Activated T-helper 1 cell treated with anti-CD3 and anti-CD28 coated beads, Interleukin-12 subunit alpha, Interleukin-12 subunit beta, Interleukin-2, Interleukin-4 antibody, amounts not matched to agents 30 ng/mL and 10 ng/mL and 1 ng/mL, durations not matched to agents 14 hours and 24 hours and 36 hours (primary cell): ENCODE measurements at regions of chr19 and their contacts with region 1.

Region 1: GRCh38 chr19:42450314-42450934 is 7.7 kb upstream of the CXCL17 start:
- DNase-seq: peak; percentile 74
- H3K4me3 Mint-ChIP-seq: no peak overlapping the region
- H3K27ac Mint-ChIP-seq: no peak overlapping the region
- H3K4me1 Mint-ChIP-seq: peaks cover 7% of the 10 kb centered on the region
- H3K27me3 Mint-ChIP-seq: peaks cover 2% of the 10 kb centered on the region

Region 2: GRCh38 chr19:42352301-42353259 is 97.8 kb before region 1 on chr19:
- intact Hi-C with region 1: no loop called
- DNase-seq: no peak
- H3K4me3 Mint-ChIP-seq: no peak overlapping the region
- H3K27ac Mint-ChIP-seq: no peak overlapping the region
- H3K4me1 Mint-ChIP-seq: no peaks in the 10 kb centered on the region
- H3K27me3 Mint-ChIP-seq: no peaks in the 10 kb centered on the region

Region 3: DNA sequence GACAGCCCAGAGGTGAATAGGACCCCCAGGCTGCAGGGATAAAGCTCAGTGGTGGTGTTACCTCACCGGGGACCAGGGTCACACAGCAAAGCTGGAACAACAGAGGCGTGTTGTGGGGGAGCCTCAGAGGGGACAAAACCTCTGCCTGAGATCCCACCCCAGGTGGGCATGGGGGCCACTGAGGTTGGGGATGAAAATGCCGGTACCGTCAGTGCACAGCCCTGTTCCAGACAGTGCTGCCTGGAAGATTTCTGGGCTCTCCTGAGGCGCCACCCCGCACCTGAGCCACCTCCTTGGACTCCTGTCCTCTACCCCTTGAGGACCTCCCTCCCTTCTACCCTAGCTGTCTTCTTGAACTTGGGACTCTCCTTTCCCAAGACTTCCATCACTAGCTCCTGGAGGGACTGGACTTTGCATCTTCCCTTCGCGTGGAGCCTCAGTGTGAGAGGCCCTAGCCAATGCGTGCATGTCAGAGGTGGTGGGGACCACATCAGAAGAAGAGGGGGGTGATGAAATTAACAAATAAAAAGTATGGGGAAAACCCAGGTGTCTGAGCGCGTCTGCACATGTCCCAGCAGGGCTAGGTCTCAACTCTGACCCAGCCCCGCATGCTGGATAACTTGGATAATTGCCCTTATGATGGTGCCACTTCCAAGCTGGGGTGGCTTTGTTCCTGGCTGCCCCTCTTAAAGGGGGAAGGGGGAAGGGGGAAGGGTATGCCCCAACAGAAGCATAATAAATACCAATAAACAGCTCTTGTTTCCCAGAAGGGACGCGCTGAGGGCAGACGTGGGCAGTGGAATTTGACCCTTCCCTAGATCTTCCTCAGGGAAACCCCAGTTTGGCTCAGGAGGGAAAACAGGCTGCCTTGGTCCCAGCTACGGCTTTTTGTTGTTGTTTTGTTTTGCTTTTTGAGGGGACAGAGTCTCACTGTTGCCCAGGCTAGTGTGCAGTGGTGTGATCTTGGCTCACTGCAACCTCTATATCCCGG is 71.9 kb before region 1 on chr19:
- intact Hi-C with region 1: no loop called
- DNase-seq: no peak
- H3K4me3 Mint-ChIP-seq: no peak overlapping the region
- H3K27ac Mint-ChIP-seq: no peak overlapping the region
- H3K4me1 Mint-ChIP-seq: no peaks in the 10 kb centered on the region
- H3K27me3 Mint-ChIP-seq: peaks cover 5% of the 10 kb centered on the region

Region 4: GRCh38 chr19:42468273-42468796 is 17.9 kb after region 1 on chr19:
- intact Hi-C with region 1: no loop called
- DNase-seq: no peak
- H3K4me3 Mint-ChIP-seq: no peak overlapping the region
- H3K27ac Mint-ChIP-seq: no peak overlapping the region
- H3K4me1 Mint-ChIP-seq: peaks cover 27% of the 10 kb centered on the region
- H3K27me3 Mint-ChIP-seq: peaks cover 3% of the 10 kb centered on the region

Region 5: DNA sequence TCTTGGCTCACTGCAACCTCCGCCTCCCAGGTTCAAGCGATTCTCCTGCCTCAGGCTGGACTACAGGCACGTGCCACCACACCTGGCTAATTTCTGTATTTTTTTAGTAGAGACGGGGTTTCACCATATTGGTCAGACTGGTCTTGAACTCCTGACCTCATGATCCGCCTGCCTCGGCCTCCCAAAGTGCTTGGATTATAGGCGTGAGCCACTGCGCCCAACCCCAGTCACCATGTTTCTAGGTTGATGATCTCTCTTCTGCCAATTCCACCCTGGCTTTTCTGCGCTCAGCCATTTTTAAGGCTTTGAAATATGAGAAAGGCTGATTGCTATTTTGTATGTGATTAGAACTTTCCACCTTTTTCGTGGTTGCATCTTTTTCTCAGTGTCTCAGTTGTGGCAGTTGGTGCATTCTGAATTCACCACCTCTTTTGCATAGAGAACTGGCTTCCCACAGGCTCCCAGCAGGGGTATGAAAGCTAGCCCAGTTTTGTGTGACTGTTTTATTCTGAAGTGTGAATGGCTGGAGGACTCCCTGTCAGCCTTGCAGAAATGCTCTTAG is 62.4 kb after region 1 on chr19:
- intact Hi-C with region 1: loop called (anchors 1 kb)
- DNase-seq: no peak
- H3K4me3 Mint-ChIP-seq: no peak overlapping the region
- H3K27ac Mint-ChIP-seq: peak overlapping the region; percentile 75
- H3K4me1 Mint-ChIP-seq: peaks cover 41% of the 10 kb centered on the region
- H3K27me3 Mint-ChIP-seq: peaks cover 2% of the 10 kb centered on the region

Region 6: GRCh38 chr19:42529248-42529764 is 78.9 kb after region 1 on chr19:
- intact Hi-C with region 1: loop called (anchors 1 kb)
- DNase-seq: peak; percentile 58
- H3K4me3 Mint-ChIP-seq: peak overlapping the region; percentile 84
- H3K27ac Mint-ChIP-seq: peak overlapping the region; percentile 92
- H3K4me1 Mint-ChIP-seq: peaks cover 34% of the 10 kb centered on the region
- H3K27me3 Mint-ChIP-seq: peaks cover 4% of the 10 kb centered on the region

Region 7: GRCh38 chr19:42563352-42564210 is 113.2 kb after region 1 on chr19:
- intact Hi-C with region 1: loop called (anchors 1 kb)
- DNase-seq: no peak
- H3K4me3 Mint-ChIP-seq: no peak overlapping the region
- H3K27ac Mint-ChIP-seq: no peak overlapping the region
- H3K4me1 Mint-ChIP-seq: peaks cover 6% of the 10 kb centered on the region
- H3K27me3 Mint-ChIP-seq: peaks cover 12% of the 10 kb centered on the region

Region 8: GRCh38 chr19:42596391-42597072 is 146.1 kb after region 1 on chr19:
- intact Hi-C with region 1: loop called (anchors 1 kb)
- DNase-seq: no peak
- H3K4me3 Mint-ChIP-seq: no peak overlapping the region
- H3K27ac Mint-ChIP-seq: no peak overlapping the region
- H3K4me1 Mint-ChIP-seq: no peaks in the 10 kb centered on the region
- H3K27me3 Mint-ChIP-seq: peaks cover 16% of the 10 kb centered on the region